ENCODE measurements at regions of chr4 and their contacts with region 1.

Region 1: GRCh38 chr4:73258686-73259570 is at the start of gene ANKRD17:
- DNase-seq: peak; percentile 82 to 92 (median 89)
- ATAC-seq: peak; percentile 87
- H3K4me3 ChIP-seq: peak within 1 kb of the TSS; percentile 81
- H3K4me3 Mint-ChIP-seq: peak within 1 kb of the TSS; percentile 98 to 100 (median 99)
- H3K27ac ChIP-seq: peak within 1 kb of the TSS; percentile 98
- H3K27ac Mint-ChIP-seq: peak within 1 kb of the TSS; percentile 99 to 100 (median 100)
- H3K4me1 ChIP-seq: peaks cover 6 to 44% of the 10 kb centered on the region in 2 donors
- H3K4me1 Mint-ChIP-seq: peaks cover 37 to 90% (median 65%) of the 10 kb centered on the region in 7 donors
- H3K27me3 ChIP-seq: no peaks in the 10 kb centered on the region
- H3K27me3 Mint-ChIP-seq: no peaks in the 10 kb centered on the region
- total RNA-seq, gene ANKRD17: 54.4 to 67.5 (median 59.6) TPM

Region 2: DNA sequence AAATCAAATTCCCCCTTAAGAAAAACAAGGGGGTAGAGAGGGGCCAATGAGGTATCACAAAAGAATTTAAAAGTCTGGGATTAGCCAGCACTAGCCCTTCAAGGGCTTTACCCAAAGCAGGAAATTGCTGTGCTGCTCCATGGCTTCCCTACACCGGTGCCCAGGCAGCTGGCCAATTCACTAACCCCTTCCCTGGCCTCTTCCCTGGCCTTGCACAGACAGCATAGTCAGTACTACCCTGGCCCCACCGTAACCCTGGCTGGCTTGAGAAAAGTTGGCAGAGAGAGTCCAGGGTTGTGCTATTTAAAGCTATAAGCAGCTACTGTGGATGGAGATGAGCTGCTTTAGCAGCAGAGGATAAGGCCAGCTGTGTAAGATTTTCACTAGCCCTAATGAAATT is 733.0 kb before region 1 on chr4:
- CTCF ChIA-PET with region 1: no interaction called
- POLR2A ChIA-PET with region 1: no interaction called
- intact Hi-C with region 1: loop called in 1 of 2 experiments (anchors 10 kb)
- DNase-seq: no peak
- ATAC-seq: no peak
- H3K4me3 ChIP-seq: no peak overlapping the region
- H3K4me3 Mint-ChIP-seq: no peak overlapping the region
- H3K27ac ChIP-seq: no peak overlapping the region
- H3K27ac Mint-ChIP-seq: no peak overlapping the region
- H3K4me1 ChIP-seq: no peaks in the 10 kb centered on the region
- H3K4me1 Mint-ChIP-seq: no peaks in the 10 kb centered on the region
- H3K27me3 ChIP-seq: no peaks in the 10 kb centered on the region
- H3K27me3 Mint-ChIP-seq: peaks cover 0 to 7% (median 5%) of the 10 kb centered on the region in 5 donors

Region 3: DNA sequence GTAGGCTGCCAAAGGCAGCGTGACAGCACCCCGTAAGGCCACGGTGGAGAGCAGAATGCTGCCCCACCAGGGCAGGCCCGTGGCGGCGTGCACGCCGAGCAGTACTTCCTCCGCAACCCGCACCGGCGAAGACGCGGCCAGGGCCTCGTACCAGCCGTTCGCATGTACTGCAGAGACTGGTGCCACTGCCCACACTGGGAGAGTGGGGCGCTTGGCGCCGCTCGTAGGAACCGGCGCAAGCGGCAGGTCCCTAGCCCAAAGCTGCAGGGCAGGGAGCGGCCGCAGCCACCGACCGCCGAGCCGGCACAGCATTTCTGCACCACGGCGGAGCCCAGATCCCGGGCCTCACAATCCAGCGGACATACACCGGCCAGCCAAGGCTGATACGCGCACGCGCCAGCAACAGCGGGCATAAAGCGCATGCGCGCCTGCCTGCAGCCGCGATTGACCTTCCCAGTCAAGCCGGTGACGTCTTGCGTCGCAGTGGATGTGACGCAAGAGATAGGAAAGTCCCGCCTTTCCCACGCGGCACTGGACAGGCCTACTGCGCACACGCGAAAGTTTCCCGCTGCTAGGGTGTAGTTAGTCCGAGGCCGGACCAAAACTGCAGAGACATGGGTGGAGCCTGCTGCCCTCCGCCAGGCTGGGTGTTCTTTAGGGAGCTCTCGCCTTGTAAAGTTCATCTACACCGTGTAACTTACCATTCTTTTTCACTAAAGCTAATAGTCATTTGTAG is 189.4 kb before region 1 on chr4 and contains the start of gene COX18:
- CTCF ChIA-PET with region 1: interaction called, 5 read pairs
- POLR2A ChIA-PET with region 1: interaction called, 84 read pairs
- intact Hi-C with region 1: loop called (anchors 1 kb)
- DNase-seq: peak; percentile 90 to 93 (median 91)
- ATAC-seq: peak; percentile 87
- H3K4me3 ChIP-seq: peak within 1 kb of the TSS; percentile 79
- H3K4me3 Mint-ChIP-seq: peak within 1 kb of the TSS; percentile 86 to 97 (median 90)
- H3K27ac ChIP-seq: peak within 1 kb of the TSS; percentile 98
- H3K27ac Mint-ChIP-seq: peak within 1 kb of the TSS; percentile 93 to 99 (median 98)
- H3K4me1 ChIP-seq: peaks cover 25 to 29% of the 10 kb centered on the region in 2 donors
- H3K4me1 Mint-ChIP-seq: peaks cover 24 to 46% (median 39%) of the 10 kb centered on the region in 7 donors
- H3K27me3 ChIP-seq: no peaks in the 10 kb centered on the region
- H3K27me3 Mint-ChIP-seq: no peaks in the 10 kb centered on the region
- total RNA-seq, gene COX18: 11.1 to 18.4 (median 14.0) TPM

Region 4: GRCh38 chr4:73142995-73143547 is 115.9 kb before region 1 on chr4:
- CTCF ChIA-PET with region 1: no interaction called
- POLR2A ChIA-PET with region 1: interaction called, 3 read pairs
- intact Hi-C with region 1: loop called (anchors 1 to 5 kb)
- DNase-seq: no peak
- ATAC-seq: no peak
- H3K4me3 ChIP-seq: no peak overlapping the region
- H3K4me3 Mint-ChIP-seq: no peak overlapping the region
- H3K27ac ChIP-seq: no peak overlapping the region
- H3K27ac Mint-ChIP-seq: peak overlapping the region in 2 of 9 donors; percentile 28 to 42
- H3K4me1 ChIP-seq: no peaks in the 10 kb centered on the region
- H3K4me1 Mint-ChIP-seq: peaks cover 0 to 20% (median 6%) of the 10 kb centered on the region in 7 donors
- H3K27me3 ChIP-seq: no peaks in the 10 kb centered on the region
- H3K27me3 Mint-ChIP-seq: no peaks in the 10 kb centered on the region

Region 5: DNA sequence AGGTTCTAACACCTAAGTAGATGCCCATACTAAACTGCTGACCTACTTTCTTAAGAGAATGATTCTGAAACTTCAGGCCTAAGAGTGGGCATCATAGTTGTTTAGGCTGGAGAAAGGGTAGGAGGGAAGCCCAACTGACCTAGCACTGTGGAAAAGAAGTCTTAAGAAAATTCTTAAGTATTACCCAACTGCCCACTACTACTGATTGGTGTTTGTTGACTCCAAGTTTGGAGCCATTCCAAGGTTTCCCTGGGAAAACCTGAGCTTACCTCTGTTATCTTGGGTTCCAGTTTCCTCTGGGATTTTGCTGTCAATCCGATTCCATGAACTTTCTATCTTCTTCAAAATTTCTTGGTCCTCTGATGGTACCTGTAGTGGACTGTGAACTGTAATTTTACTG is 24.2 kb before region 1 on chr4:
- CTCF ChIA-PET with region 1: interaction called, 4 read pairs
- POLR2A ChIA-PET with region 1: no interaction called
- intact Hi-C with region 1: loop called in 1 of 2 experiments (anchors 2 kb)
- DNase-seq: no peak
- ATAC-seq: no peak
- H3K4me3 ChIP-seq: no peak overlapping the region
- H3K4me3 Mint-ChIP-seq: no peak overlapping the region
- H3K27ac ChIP-seq: no peak overlapping the region
- H3K27ac Mint-ChIP-seq: peak overlapping the region in 3 of 9 donors; percentile 28 to 55 (median 34)
- H3K4me1 ChIP-seq: no peaks in the 10 kb centered on the region
- H3K4me1 Mint-ChIP-seq: peaks cover 21 to 67% (median 59%) of the 10 kb centered on the region in 7 donors
- H3K27me3 ChIP-seq: no peaks in the 10 kb centered on the region
- H3K27me3 Mint-ChIP-seq: no peaks in the 10 kb centered on the region

Region 6: GRCh38 chr4:74397748-74398426 is 1139.0 kb after region 1 on chr4:
- CTCF ChIA-PET with region 1: no interaction called
- POLR2A ChIA-PET with region 1: no interaction called
- intact Hi-C with region 1: loop called in 1 of 2 experiments (anchors 5 kb)
- DNase-seq: peak in 4 of 9 donors; percentile 10 to 58 (median 38)
- ATAC-seq: peak; percentile 78
- H3K4me3 ChIP-seq: peak overlapping the region; percentile 76
- H3K4me3 Mint-ChIP-seq: peak overlapping the region; percentile 89 to 99 (median 96)
- H3K27ac ChIP-seq: peak overlapping the region; percentile 83
- H3K27ac Mint-ChIP-seq: peak overlapping the region; percentile 92 to 99 (median 97)
- H3K4me1 ChIP-seq: no peaks in the 10 kb centered on the region
- H3K4me1 Mint-ChIP-seq: peaks cover 0 to 19% (median 11%) of the 10 kb centered on the region in 7 donors
- H3K27me3 ChIP-seq: no peaks in the 10 kb centered on the region
- H3K27me3 Mint-ChIP-seq: peaks cover 0 to 5% (median 0%) of the 10 kb centered on the region in 5 donors